ENCODE measurements at regions of chr13 and their contacts with region 1.

Region 1: GRCh38 chr13:52128714-52129700 is at the start of gene NEK5:
- DNase-seq: peak; percentile 12 to 24
- ATAC-seq: peak; percentile 81 to 87
- H3K4me3 ChIP-seq: peak within 1 kb of the TSS; percentile 67 to 80 (median 74)
- H3K27ac ChIP-seq: no peak within 1 kb of the TSS
- H3K4me1 ChIP-seq: peaks cover 6 to 21% of the 10 kb centered on the region in 2 donors
- H3K27me3 ChIP-seq: no peaks in the 10 kb centered on the region
- CTCF ChIP-seq: peak; percentile 62 to 77 (median 67)
- POLR2A ChIP-seq: no peak
- total RNA-seq, gene NEK5: 0.07 TPM in 1 of 4 donors, not detected in the others

Region 2: GRCh38 chr13:51125498-51126226 is 1003.3 kb before region 1 on chr13:
- in situ Hi-C with region 1: no loop called
- intact Hi-C with region 1: loop called (anchors 10 kb)
- DNase-seq: no peak
- ATAC-seq: peak in 1 of 2 donors; percentile 36
- H3K4me3 ChIP-seq: no peak overlapping the region
- H3K27ac ChIP-seq: no peak overlapping the region
- H3K4me1 ChIP-seq: no peaks in the 10 kb centered on the region
- H3K27me3 ChIP-seq: no peaks in the 10 kb centered on the region
- CTCF ChIP-seq: peak; percentile 39 to 72 (median 59)
- POLR2A ChIP-seq: no peak

Region 3: DNA sequence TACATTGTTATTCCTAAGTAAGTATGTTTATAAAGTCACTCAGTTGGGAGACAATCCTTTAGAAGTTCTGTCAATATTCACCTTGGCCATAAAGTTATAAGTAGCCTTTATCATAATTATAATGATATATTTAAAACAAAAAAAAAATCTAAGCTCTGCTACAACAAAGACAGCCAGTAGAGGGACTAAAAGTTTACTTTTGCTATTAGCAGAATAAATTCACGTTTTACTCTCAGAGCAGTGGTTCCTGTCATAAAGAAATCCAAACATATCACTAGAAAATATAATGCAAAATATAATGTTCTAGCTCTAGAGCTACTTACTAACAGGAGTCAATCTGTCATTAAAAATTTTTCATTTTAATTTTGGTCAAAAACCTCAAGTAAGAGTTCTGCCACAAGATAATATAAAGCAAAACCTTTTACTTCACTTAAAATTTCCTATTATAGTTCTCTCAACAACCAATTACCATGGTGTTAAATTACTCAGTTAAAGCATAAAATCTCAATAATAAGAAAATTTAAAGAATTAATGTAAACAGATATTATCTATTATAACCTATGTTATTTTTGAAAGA is 693.9 kb before region 1 on chr13:
- in situ Hi-C with region 1: loop called in 1 of 4 experiments (anchors 25 kb)
- intact Hi-C with region 1: no loop called
- DNase-seq: no peak
- ATAC-seq: no peak
- H3K4me3 ChIP-seq: no peak overlapping the region
- H3K27ac ChIP-seq: no peak overlapping the region
- H3K4me1 ChIP-seq: peaks cover 5 to 8% of the 10 kb centered on the region in 2 donors
- H3K27me3 ChIP-seq: no peaks in the 10 kb centered on the region
- CTCF ChIP-seq: peak in 3 of 5 experiments; percentile 29 to 47 (median 47)
- POLR2A ChIP-seq: no peak

Region 4: DNA sequence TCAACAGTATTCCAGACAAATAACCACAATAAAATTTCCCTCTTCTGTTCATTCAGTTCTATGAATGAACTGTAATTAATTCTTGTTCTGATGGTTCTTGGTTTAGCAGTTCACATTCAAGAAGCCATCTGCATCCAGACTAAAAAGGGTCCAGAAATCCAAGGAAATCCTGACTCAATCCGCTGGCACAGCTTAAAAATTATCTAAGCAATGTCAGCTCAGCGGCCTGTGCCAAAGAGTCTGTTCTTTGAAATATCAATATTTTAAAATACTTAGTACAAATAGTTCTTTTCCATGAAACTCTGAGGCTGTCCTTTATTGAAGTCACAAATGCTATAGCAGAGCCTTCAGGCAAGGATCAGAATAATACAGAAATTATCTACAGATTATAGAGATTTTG is 382.2 kb before region 1 on chr13:
- in situ Hi-C with region 1: no loop called
- intact Hi-C with region 1: no loop called
- DNase-seq: no peak
- ATAC-seq: peak in 1 of 2 donors; percentile 42
- H3K4me3 ChIP-seq: no peak overlapping the region
- H3K27ac ChIP-seq: no peak overlapping the region
- H3K4me1 ChIP-seq: no peaks in the 10 kb centered on the region
- H3K27me3 ChIP-seq: no peaks in the 10 kb centered on the region
- CTCF ChIP-seq: no peak
- POLR2A ChIP-seq: no peak

Region 5: GRCh38 chr13:51814825-51815650 is 314.0 kb before region 1 on chr13:
- in situ Hi-C with region 1: loop called (anchors 10 to 25 kb)
- intact Hi-C with region 1: loop called (anchors 2 kb)
- DNase-seq: peak in 1 of 2 donors; percentile 51
- ATAC-seq: peak; percentile 46 to 79
- H3K4me3 ChIP-seq: peak overlapping the region in 2 of 4 donors; percentile 13 to 33
- H3K27ac ChIP-seq: no peak overlapping the region
- H3K4me1 ChIP-seq: peaks cover 16 to 21% of the 10 kb centered on the region in 2 donors
- H3K27me3 ChIP-seq: no peaks in the 10 kb centered on the region
- CTCF ChIP-seq: peak; percentile 58 to 85 (median 78)
- POLR2A ChIP-seq: no peak

Region 6: DNA sequence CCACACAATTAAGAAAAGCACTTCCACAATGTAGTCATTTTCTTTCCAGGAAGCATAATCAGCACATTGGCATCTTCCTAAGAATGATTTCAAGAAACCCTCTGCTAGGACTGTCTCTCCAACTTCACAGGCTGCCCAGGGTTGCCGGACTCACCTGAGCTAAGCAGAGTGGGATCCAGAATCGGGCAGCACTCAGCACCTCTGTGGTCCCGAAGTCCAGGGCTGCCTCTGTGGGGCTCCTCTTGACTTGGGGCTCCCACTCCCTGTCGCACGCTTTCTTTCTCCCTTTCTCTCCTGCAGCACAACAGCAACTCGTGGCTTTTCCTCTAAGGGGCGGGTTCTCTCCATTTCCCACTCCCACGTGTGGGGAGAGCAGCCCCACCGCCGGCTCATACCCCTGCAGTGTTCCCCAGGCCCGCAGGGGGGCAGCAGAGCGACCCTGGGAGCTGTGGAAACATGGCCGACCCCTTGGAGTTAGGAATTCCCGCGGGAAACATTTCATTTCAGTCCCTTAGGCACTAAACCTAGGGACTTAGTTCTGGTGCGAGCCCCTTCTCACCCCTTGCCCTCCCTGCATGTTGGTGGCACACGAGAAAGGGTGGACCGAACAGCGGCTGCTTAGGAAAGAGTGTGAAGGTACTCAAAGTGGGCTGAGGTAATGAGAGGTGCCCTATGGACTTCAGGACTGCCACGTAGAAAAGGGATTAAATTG is 284.0 kb before region 1 on chr13 and contains the start of gene TMEM272:
- in situ Hi-C with region 1: no loop called
- intact Hi-C with region 1: loop called (anchors 1 kb)
- DNase-seq: no peak
- ATAC-seq: peak in 1 of 2 donors; percentile 76
- H3K4me3 ChIP-seq: peak within 1 kb of the TSS; percentile 7 to 47 (median 14)
- H3K27ac ChIP-seq: no peak within 1 kb of the TSS
- H3K4me1 ChIP-seq: no peaks in the 10 kb centered on the region
- H3K27me3 ChIP-seq: no peaks in the 10 kb centered on the region
- CTCF ChIP-seq: peak; percentile 43 to 88 (median 73)
- POLR2A ChIP-seq: no peak
- total RNA-seq, gene TMEM272: 0.20 to 0.41 (median 0.27) TPM in 3 of 4 donors, not detected in the other

Region 7: GRCh38 chr13:51895906-51896888 is 232.8 kb before region 1 on chr13:
- in situ Hi-C with region 1: no loop called
- intact Hi-C with region 1: loop called (anchors 1 kb)
- DNase-seq: no peak
- ATAC-seq: peak in 1 of 2 donors; percentile 54
- H3K4me3 ChIP-seq: no peak overlapping the region
- H3K27ac ChIP-seq: no peak overlapping the region
- H3K4me1 ChIP-seq: no peaks in the 10 kb centered on the region
- H3K27me3 ChIP-seq: no peaks in the 10 kb centered on the region
- CTCF ChIP-seq: peak in 4 of 5 experiments; percentile 8 to 61 (median 41)
- POLR2A ChIP-seq: no peak

Region 8: DNA sequence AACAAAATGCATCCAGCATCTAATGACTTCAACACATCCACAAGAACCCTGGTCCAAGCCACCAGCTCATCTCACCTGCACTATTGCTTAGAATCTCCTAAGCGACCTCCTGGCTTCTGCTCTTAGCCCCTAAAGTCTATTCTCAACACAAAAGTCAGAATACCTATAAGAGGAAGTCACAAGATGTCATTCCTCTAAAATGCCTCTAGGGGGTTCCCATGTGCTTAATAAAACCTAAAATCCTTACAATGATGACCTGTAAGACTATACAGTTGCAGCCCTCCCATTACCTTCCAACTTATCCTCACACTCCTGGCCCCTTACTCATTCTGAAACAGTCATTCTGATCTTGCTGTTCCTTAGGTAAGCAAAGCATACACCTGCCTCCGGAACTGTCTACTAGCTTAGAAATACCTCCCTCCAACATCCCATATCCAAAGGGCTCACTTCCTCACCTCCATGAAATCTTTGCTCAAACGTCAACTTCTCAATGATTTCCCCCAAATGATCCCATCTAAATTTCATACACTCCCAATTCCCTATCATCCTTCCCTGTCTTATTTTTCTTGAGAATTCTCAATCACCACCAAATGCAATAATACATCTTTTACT is 127.8 kb before region 1 on chr13:
- in situ Hi-C with region 1: loop called in 2 of 4 experiments (anchors 10 kb)
- intact Hi-C with region 1: loop called (anchors 2 kb)
- DNase-seq: no peak
- ATAC-seq: peak; percentile 46 to 54
- H3K4me3 ChIP-seq: no peak overlapping the region
- H3K27ac ChIP-seq: no peak overlapping the region
- H3K4me1 ChIP-seq: peaks cover 20 to 32% of the 10 kb centered on the region in 2 donors
- H3K27me3 ChIP-seq: no peaks in the 10 kb centered on the region
- CTCF ChIP-seq: peak; percentile 42 to 71 (median 53)
- POLR2A ChIP-seq: no peak

Region 9: DNA sequence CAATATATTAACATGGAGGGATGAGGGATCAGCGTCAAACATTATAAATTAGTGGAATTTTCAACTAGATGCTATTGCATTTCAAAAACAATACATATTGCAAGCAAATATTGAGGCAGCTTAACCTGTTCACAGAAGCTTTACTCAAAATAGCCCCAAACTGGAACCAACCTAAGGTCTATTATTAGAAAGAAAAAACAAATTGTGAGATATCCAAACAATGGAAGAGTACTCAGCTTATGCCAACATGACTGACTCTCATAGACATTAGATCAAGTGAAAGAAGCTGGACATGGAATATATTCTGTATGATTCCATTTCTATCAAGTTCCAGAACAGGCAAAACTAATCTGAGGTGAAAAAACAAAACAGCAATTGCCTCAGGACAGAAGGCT is 58.0 kb after region 1 on chr13:
- in situ Hi-C with region 1: no loop called
- intact Hi-C with region 1: no loop called
- DNase-seq: no peak
- ATAC-seq: no peak
- H3K4me3 ChIP-seq: no peak overlapping the region
- H3K27ac ChIP-seq: peak overlapping the region in 2 of 4 donors; percentile 18 to 23
- H3K4me1 ChIP-seq: peaks cover 2 to 9% of the 10 kb centered on the region in 2 donors
- H3K27me3 ChIP-seq: no peaks in the 10 kb centered on the region
- CTCF ChIP-seq: no peak
- POLR2A ChIP-seq: no peak

Measured in gastrocnemius medialis (tissue), 4 donors.